ENCODE measurements at regions of chr1 and their contacts with region 1.

Region 1: GRCh38 chr1:27057801-27058625 is 45.4 kb upstream of the TENT5B start:
- DNase-seq: no peak
- ATAC-seq: no peak
- H3K4me3 Mint-ChIP-seq: no peak overlapping the region
- H3K27ac Mint-ChIP-seq: no peak overlapping the region
- H3K4me1 Mint-ChIP-seq: no peaks in the 10 kb centered on the region
- H3K27me3 Mint-ChIP-seq: no peaks in the 10 kb centered on the region
- CTCF ChIP-seq: no peak

Region 2: GRCh38 chr1:27097484-27097917 is 39.5 kb after region 1 on chr1:
- CTCF ChIA-PET with region 1: interaction called, 14 read pairs
- POLR2A ChIA-PET with region 1: interaction called, 3 read pairs
- intact Hi-C with region 1: no loop called
- DNase-seq: peak; percentile 80
- ATAC-seq: peak; percentile 79
- H3K4me3 Mint-ChIP-seq: no peak overlapping the region
- H3K27ac Mint-ChIP-seq: no peak overlapping the region
- H3K4me1 Mint-ChIP-seq: peaks cover 10% of the 10 kb centered on the region
- H3K27me3 Mint-ChIP-seq: no peaks in the 10 kb centered on the region
- CTCF ChIP-seq: peak; percentile 95